ENCODE measurements at regions of chr7 and their contacts with region 1.

Region 1: DNA sequence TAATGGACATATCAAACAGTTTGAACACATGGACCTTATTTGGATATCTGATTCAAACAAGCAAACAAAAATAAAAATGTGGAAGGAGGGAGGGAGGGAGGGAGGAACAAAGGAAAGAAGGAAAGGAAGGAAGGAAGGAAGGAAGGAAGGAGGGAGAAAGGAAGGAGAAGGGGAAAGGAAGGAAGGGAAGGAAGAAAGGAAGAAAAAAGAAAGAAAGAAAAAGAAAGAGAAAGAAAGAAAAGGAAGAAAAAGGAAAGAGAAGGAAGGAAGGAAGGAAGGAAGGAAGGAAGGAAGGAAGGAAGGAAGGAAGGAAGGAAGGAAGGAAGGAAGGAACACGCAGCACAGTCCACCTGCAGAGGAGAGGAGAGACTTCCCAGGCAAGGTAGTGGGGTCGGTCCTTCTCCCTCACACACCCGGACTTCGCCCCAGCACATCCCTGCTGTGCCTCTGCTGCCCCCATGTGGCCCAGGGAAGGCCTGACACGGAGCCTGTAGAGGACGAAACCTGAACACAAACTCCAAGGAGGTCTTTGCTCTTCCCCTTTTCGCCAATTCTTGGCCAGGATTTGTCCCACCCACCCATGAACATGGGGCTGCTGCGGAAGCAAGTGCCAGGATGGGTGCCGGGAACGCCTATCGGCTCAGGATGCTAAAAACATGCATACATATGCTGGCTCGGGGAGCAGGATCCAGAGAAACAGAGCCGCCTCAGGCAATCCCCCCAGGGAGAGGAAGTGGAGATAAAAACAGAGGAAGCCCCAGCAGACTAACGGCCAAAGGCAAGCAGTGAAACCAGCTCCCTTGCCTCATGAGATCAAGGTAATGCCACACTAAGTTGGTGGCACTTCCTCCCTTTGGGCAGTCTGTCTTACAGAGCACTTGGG is 52.3 kb upstream of the DGKI start:
- DNase-seq: peak; percentile 48
- ATAC-seq: peak; percentile 79
- H3K4me3 ChIP-seq: 0 out of 2 replicates have a peak overlapping the region, but pooled peaks have one; percentile 1
- H3K27ac ChIP-seq: peak overlapping the region; percentile 75
- H3K4me1 ChIP-seq: peaks cover 33% of the 10 kb centered on the region
- H3K27me3 ChIP-seq: no peaks in the 10 kb centered on the region
- CTCF ChIP-seq: peak; percentile 88 to 98 (median 98)
- EP300 ChIP-seq: no peak
- POLR2A ChIP-seq: no peak
- RAD21 ChIP-seq: peak; percentile 99

Region 2: GRCh38 chr7:137613006-137613405 is 286.1 kb before region 1 on chr7:
- CTCF ChIA-PET with region 1: interaction called, 25 read pairs
- POLR2A ChIA-PET with region 1: no interaction called
- RAD21 ChIA-PET with region 1: no interaction called
- SMC1A ChIA-PET with region 1: interaction called, 20 read pairs
- in situ Hi-C with region 1: loop called (anchors 5 kb)
- intact Hi-C with region 1: no loop called
- DNase-seq: no peak
- ATAC-seq: no peak
- H3K4me3 ChIP-seq: no peak overlapping the region
- H3K27ac ChIP-seq: no peak overlapping the region
- H3K4me1 ChIP-seq: no peaks in the 10 kb centered on the region
- H3K27me3 ChIP-seq: peaks cover 0 to 3% of the 10 kb centered on the region in 2 experiments; a peak in 2 of 4 replicates
- CTCF ChIP-seq: no peak
- EP300 ChIP-seq: no peak
- POLR2A ChIP-seq: no peak
- RAD21 ChIP-seq: no peak

Region 3: GRCh38 chr7:137798073-137798763 is 100.9 kb before region 1 on chr7:
- CTCF ChIA-PET with region 1: no interaction called
- POLR2A ChIA-PET with region 1: no interaction called
- RAD21 ChIA-PET with region 1: interaction called, 6 read pairs
- SMC1A ChIA-PET with region 1: interaction called, 13 read pairs
- in situ Hi-C with region 1: no loop called
- intact Hi-C with region 1: loop called (anchors 1 kb)
- DNase-seq: peak; percentile 59
- ATAC-seq: peak; percentile 96
- H3K4me3 ChIP-seq: no peak overlapping the region
- H3K27ac ChIP-seq: no peak overlapping the region; the same call in 1 of the 2 replicates
- H3K4me1 ChIP-seq: no peaks in the 10 kb centered on the region
- H3K27me3 ChIP-seq: no peaks in the 10 kb centered on the region
- CTCF ChIP-seq: no peak
- EP300 ChIP-seq: peak; percentile 48 to 84; a peak in 3 of 4 replicates
- POLR2A ChIP-seq: no peak
- RAD21 ChIP-seq: no peak

Region 4: GRCh38 chr7:137846827-137847567 is 52.1 kb before region 1 on chr7 and contains the start of gene DGKI:
- CTCF ChIA-PET with region 1: interaction called, 4 read pairs
- POLR2A ChIA-PET with region 1: interaction called, 3 read pairs
- RAD21 ChIA-PET with region 1: interaction called, 5 read pairs
- SMC1A ChIA-PET with region 1: interaction called, 8 read pairs
- in situ Hi-C with region 1: no loop called
- intact Hi-C with region 1: loop called (anchors 2 kb)
- DNase-seq: no peak
- ATAC-seq: peak; percentile 67
- H3K4me3 ChIP-seq: peak within 1 kb of the TSS; percentile 17; the same call in 1 of the 2 replicates
- H3K27ac ChIP-seq: no peak within 1 kb of the TSS
- H3K4me1 ChIP-seq: no peaks in the 10 kb centered on the region
- H3K27me3 ChIP-seq: peaks cover 1 to 14% of the 10 kb centered on the region in 2 experiments; a peak in 2 of 4 replicates
- CTCF ChIP-seq: no peak
- EP300 ChIP-seq: no peak
- POLR2A ChIP-seq: peak; percentile 51
- RAD21 ChIP-seq: no peak
- polyA plus RNA-seq, gene DGKI: 28.3 to 37.1 TPM

Region 5: DNA sequence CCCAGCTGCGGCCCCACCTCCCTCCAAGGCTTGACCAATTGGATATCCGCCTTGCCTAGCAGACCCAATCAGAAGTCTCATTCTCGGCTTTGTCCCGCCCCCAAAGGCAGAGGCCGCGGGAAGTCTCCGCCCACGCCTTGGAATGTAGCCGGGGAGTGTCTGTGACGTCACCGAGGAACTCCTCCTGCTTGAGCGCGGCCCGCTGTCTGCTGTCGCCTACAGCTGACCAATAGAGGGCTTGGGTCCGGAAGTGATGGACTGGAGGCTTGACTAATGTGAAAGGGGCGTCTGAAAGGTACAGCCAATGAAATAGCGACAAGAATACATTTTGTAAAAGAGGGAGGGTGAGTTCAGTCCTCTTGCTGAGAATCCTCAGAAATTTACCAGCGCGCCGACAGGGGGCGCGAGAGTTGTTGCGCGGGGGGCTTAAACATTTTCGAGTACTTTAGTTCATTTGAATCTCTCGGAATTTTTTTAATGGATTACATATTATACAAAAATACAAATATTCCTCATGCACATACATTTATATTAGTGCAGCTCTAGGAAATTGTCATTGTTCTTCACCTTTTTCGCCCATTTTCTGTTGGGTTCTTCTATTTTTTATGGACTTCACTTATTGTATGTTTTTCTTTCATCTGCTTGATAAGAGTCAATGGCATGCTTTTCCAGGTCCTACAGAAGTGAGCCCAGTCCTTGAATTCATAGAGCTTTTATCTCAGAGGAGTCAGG is 103.2 kb after region 1 on chr7:
- CTCF ChIA-PET with region 1: interaction called, 704 read pairs
- POLR2A ChIA-PET with region 1: interaction called, 8 read pairs
- RAD21 ChIA-PET with region 1: interaction called, 340 read pairs
- SMC1A ChIA-PET with region 1: interaction called, 436 read pairs
- in situ Hi-C with region 1: no loop called
- intact Hi-C with region 1: no loop called
- DNase-seq: peak; percentile 99
- ATAC-seq: peak; percentile 92
- H3K4me3 ChIP-seq: peak overlapping the region; percentile 83
- H3K27ac ChIP-seq: peak overlapping the region; percentile 55
- H3K4me1 ChIP-seq: peaks cover 6% of the 10 kb centered on the region
- H3K27me3 ChIP-seq: no peaks in the 10 kb centered on the region
- CTCF ChIP-seq: peak; percentile 85 to 95 (median 90)
- EP300 ChIP-seq: no peak
- POLR2A ChIP-seq: no peak
- RAD21 ChIP-seq: peak; percentile 62

Region 6: GRCh38 chr7:138176060-138176459 is 277.0 kb after region 1 on chr7:
- CTCF ChIA-PET with region 1: no interaction called
- POLR2A ChIA-PET with region 1: no interaction called
- RAD21 ChIA-PET with region 1: no interaction called
- SMC1A ChIA-PET with region 1: no interaction called
- in situ Hi-C with region 1: no loop called
- intact Hi-C with region 1: no loop called
- DNase-seq: no peak
- ATAC-seq: no peak
- H3K4me3 ChIP-seq: no peak overlapping the region
- H3K27ac ChIP-seq: no peak overlapping the region
- H3K4me1 ChIP-seq: peaks cover 6% of the 10 kb centered on the region; the same call in 1 of the 2 replicates
- H3K27me3 ChIP-seq: no peaks in the 10 kb centered on the region
- CTCF ChIP-seq: no peak
- EP300 ChIP-seq: no peak
- POLR2A ChIP-seq: no peak
- RAD21 ChIP-seq: no peak

Region 7: DNA sequence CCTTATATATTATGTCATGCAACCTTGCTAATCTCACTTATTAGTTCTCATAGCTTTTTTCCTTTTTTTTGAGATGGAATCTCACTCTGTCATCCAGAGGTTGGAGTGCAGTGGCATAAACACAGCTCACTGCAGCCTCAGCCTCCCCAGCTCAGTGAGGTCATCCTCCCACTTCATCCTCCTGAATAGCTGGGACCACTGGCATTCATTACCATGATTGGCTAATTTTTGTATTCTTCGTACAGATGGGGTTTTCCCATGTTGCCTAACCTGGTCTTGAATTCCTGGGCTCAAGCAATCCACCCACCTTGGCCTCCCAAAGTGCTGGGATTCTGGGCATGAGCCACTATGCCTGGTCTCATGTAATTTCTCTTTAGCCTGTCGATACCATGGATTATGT is 471.9 kb after region 1 on chr7:
- CTCF ChIA-PET with region 1: no interaction called
- POLR2A ChIA-PET with region 1: no interaction called
- RAD21 ChIA-PET with region 1: no interaction called
- SMC1A ChIA-PET with region 1: no interaction called
- in situ Hi-C with region 1: no loop called
- intact Hi-C with region 1: no loop called
- DNase-seq: no peak
- ATAC-seq: no peak
- H3K4me3 ChIP-seq: no peak overlapping the region
- H3K27ac ChIP-seq: no peak overlapping the region
- H3K4me1 ChIP-seq: no peaks in the 10 kb centered on the region
- H3K27me3 ChIP-seq: no peaks in the 10 kb centered on the region
- CTCF ChIP-seq: no peak
- EP300 ChIP-seq: no peak
- POLR2A ChIP-seq: no peak
- RAD21 ChIP-seq: no peak

Region 8: DNA sequence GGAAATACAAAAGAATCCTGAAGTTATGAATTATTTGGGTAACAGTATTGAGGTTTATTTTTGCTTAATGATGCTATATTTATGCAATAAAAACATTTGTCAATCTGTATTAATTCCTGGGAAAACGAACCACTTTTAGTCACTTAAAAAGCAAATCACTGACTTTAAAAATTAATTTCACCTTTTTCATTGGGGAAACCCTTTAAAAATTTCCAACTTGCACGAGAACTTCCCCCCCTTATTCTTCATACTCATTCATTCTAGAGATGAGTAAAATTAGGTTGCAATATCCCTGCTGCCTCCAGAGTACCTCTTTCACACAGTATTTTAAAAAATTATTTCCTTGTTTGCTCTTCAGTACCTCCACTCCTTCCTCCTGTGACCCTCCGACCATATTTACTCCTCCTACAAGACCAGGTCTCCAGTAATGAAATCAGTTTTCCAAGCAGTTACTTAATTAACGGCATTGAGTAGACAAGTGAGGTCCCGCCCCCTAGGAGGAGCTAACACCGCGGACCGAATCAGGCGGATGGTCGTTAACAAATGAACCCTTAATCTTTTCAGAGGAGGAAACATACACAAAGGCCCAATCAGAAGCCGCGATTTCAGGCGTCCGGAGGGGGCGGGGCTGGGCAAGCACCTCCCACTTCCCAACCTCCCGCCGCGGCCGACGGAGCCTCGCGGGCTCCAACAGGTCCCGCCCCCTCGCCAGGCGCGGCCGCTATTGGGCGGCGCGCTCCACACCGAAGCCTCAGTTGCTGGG is 560.5 kb after region 1 on chr7:
- CTCF ChIA-PET with region 1: no interaction called
- POLR2A ChIA-PET with region 1: no interaction called
- RAD21 ChIA-PET with region 1: no interaction called
- SMC1A ChIA-PET with region 1: no interaction called
- in situ Hi-C with region 1: no loop called
- intact Hi-C with region 1: loop called (anchors 10 kb)
- DNase-seq: peak; percentile 92
- ATAC-seq: peak; percentile 89
- H3K4me3 ChIP-seq: peak overlapping the region; percentile 48; the same call in 1 of the 2 replicates
- H3K27ac ChIP-seq: peak overlapping the region; percentile 55
- H3K4me1 ChIP-seq: no peaks in the 10 kb centered on the region
- H3K27me3 ChIP-seq: no peaks in the 10 kb centered on the region
- CTCF ChIP-seq: peak in 2 of 3 experiments; percentile 4 to 23; a peak in 1 of 6 replicates
- EP300 ChIP-seq: no peak
- POLR2A ChIP-seq: no peak
- RAD21 ChIP-seq: 0 out of 2 replicates have a peak, but pooled peaks have one; percentile 1